H1 (cell line): ENCODE measurements at regions of chr21 and their contacts with region 1.

Region 1: GRCh38 chr21:37557261-37557950 is 190.8 kb downstream of the DYRK1A start:
- DNase-seq: no peak
- H3K4me3 ChIP-seq: no peak overlapping the region
- H3K27ac ChIP-seq: no peak overlapping the region
- H3K4me1 ChIP-seq: no peaks in the 10 kb centered on the region; a peak in 1 of 7 replicates
- H3K27me3 ChIP-seq: peaks cover 0 to 1% (median 0%) of the 10 kb centered on the region in 4 experiments; a peak in 1 of 7 replicates
- CTCF ChIP-seq: no peak
- EP300 ChIP-seq: no peak
- POLR2A ChIP-seq: no peak
- RAD21 ChIP-seq: no peak

Region 2: GRCh38 chr21:37546949-37547614 is 10.3 kb before region 1 on chr21:
- CTCF ChIA-PET with region 1: interaction called, 11 read pairs
- POLR2A ChIA-PET with region 1: no interaction called
- DNase-seq: no peak
- H3K4me3 ChIP-seq: no peak overlapping the region
- H3K27ac ChIP-seq: no peak overlapping the region
- H3K4me1 ChIP-seq: peaks cover 0 to 7% (median 2%) of the 10 kb centered on the region in 4 experiments; a peak in 4 of 7 replicates
- H3K27me3 ChIP-seq: no peaks in the 10 kb centered on the region
- CTCF ChIP-seq: no peak
- EP300 ChIP-seq: no peak
- POLR2A ChIP-seq: no peak
- RAD21 ChIP-seq: no peak